ENCODE measurements at regions of chr2 and their contacts with region 1.

Region 1: DNA sequence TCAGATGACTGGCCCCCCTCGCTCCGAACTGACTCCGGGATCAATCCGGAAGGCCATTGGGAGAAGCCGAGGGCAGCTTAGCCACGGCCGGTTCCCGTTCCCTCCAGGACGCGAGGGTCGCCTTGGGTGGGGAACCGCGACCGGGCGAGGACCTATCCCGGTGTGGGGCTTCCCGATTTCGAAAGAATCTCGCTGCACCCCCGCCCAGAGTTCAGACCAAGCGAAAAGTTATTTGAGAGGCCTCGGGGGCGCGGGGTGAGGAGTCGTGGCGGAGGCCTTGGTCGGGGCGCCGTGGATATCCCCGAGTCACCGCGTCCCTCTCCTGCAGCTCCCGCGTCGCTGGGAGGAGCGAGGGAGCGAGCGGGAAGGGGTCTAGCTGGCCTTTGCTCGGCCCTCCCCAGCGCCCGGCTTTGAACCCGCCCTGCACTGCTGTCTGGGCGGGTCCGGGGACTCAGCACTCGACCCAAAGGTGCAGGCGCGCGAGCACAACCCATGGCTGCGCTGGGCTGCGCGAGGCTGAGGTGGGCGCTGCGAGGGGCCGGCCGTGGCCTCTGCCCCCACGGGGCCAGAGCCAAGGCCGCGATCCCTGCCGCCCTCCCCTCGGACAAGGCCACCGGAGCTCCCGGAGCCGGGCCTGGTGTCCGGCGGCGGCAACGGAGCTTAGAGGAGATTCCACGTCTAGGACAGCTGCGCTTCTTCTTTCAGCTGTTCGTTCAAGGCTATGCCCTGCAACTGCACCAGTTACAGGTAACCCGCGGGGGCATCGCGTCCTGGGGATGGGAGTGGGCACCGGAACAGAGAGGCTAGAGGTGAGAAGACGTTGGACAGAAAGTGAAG is at the start of gene CYP27A1:
- DNase-seq: peak; percentile 7 to 74 (median 69)
- H3K4me3 ChIP-seq: peak within 1 kb of the TSS; percentile 50 to 90 (median 77)
- H3K27ac ChIP-seq: peak within 1 kb of the TSS; percentile 9 to 96 (median 90)
- H3K27me3 ChIP-seq: peaks cover 0 to 15% (median 0%) of the 10 kb centered on the region in 45 donors
- CTCF ChIP-seq: peak in 2 of 56 donors; percentile 12
- total RNA-seq, gene CYP27A1: 12.4 to 139 (median 33.9) TPM

Region 2: DNA sequence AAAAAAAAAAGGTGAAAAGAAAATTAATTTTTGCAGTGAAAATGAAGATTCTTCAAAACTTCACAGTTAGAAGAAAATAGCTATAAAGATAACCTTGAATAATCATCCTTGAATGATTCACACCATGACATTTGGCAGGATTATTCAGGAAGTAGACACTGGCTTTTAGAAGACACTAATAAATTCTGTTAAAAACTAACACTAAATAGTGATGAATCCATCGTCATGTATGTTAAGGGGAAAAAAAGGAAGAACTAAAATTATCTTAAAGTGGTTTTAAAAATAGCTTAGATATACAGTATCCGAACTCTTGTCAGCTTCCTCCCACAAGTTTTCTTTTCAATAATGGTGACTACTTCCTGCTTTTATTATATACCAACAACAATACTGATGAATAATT is 224.0 kb before region 1 on chr2:
- intact Hi-C with region 1: no loop called
- DNase-seq: no peak
- H3K4me3 ChIP-seq: no peak overlapping the region
- H3K27ac ChIP-seq: no peak overlapping the region
- H3K27me3 ChIP-seq: no peaks in the 10 kb centered on the region
- CTCF ChIP-seq: no peak

Region 3: DNA sequence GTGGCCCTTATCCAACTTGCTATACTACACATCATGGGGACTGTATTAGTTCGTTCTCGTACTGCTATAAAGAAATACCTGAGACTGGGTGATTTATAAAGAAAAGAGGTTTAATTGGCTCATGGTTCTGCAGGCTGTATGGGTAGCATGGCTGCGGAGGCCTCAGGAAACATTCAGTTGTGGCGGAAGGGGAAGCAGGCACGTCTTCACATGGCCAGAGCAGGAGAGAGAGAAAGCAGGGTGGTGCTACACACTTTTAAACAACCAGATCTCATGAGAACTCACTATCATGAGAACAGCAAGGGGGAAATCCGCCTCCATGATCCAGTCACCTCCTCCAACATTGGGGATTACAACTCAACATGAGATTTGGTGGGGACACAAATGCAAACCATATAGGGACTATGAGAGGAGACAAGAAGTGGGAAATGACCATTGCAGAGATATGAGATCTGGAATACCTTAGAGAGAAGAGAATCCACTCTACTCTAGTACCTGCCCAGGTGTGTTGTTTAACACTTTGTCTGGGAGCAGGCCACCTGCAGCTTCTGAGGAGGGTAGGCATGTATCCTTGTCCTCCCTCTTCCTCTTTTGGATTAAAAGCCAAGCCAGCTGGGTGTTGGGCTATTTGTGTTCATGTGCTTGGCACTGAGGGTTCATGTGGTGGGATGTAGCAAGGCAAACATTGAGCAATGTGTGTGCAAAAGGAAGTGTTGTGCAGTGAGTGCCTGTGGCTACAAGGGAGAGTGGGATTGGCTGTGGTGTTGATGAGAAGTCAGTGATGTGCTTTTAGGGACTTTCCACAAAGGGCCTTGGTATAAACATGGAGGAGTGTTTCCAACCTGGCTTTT is 48.5 kb before region 1 on chr2:
- intact Hi-C with region 1: loop called in 1 of 2 experiments (anchors 5 kb)
- DNase-seq: no peak
- H3K4me3 ChIP-seq: no peak overlapping the region
- H3K27ac ChIP-seq: peak overlapping the region in 55 of 59 donors; percentile 23 to 100 (median 95)
- H3K27me3 ChIP-seq: no peaks in the 10 kb centered on the region
- CTCF ChIP-seq: no peak

Region 4: DNA sequence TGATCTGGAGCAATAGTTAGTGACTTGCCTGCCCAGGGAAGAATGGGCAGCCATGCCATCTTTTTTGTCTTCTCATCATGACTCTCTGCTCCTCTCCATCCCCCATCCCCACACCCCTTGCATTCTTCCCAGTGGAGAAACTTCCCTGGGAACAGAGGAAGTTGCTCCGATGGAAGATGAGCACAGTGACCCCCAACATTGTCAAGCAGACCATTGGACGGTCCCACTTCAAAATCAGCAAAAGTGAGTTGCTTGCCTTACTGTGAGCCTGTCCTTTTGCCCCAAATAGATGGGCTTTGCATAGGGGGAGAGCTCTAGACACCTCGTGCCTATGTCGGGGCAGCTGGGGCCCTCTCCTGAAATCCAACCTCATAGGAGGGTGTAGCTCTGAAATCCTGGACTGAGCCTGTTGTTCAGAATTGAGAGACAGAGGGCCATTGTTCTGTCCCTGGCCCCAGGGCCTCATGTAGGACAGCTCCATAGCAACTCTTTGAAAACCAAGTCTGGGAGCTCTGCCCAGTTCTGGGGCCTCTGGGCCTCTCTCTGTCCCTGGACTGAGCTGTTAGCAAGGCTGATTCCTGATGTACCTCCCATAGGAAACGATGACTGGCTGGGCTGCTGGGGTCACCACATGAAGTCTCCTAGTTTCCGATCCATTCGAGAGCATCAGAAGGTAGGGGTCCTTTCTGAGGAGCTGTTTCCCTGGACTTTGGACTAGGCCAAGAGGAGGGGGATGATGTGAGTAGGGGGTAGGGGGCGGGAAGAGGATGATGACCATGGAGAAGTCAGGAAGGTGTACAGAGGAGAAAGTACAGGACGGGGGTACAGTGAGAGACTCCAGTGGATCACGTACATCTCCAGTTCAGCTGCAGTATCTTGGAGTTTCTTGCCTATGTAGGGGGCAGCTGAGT is 36.1 kb before region 1 on chr2:
- intact Hi-C with region 1: loop called in 1 of 2 experiments (anchors 2 kb)
- DNase-seq: peak; percentile 41 to 97 (median 92)
- H3K4me3 ChIP-seq: peak overlapping the region in 54 of 59 donors; percentile 5 to 63 (median 38)
- H3K27ac ChIP-seq: peak overlapping the region; percentile 77 to 100 (median 97)
- H3K27me3 ChIP-seq: no peaks in the 10 kb centered on the region
- CTCF ChIP-seq: peak in 13 of 56 donors; percentile 6 to 31 (median 14)

Region 5: DNA sequence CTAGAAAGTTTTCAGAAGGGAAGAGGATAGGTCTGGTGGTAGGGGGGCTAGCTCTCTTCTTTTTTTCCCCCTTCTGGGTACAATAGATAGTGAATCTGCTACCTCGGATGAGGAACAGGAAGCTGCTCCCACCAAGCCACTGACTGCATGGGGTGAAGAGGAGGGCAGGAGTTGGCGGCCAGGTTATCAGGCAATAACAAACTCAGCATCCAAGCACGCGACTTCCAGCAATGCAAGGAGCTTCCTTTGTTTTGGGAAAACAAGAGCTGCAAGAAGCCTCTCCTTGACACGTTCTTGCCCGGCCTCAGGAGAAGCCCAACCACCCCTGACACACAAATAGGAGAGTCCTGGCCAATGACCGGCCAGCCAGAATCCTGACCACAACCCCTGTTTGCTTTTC is 346.5 kb after region 1 on chr2:
- intact Hi-C with region 1: no loop called
- DNase-seq: no peak
- H3K4me3 ChIP-seq: no peak overlapping the region
- H3K27ac ChIP-seq: no peak overlapping the region
- H3K27me3 ChIP-seq: no peaks in the 10 kb centered on the region
- CTCF ChIP-seq: no peak